Activated B cell treated with CpG ODN at 0.5 μM for 24 hours (primary cell): ENCODE measurements at regions of chr14 and their contacts with region 1.

Region 1: DNA sequence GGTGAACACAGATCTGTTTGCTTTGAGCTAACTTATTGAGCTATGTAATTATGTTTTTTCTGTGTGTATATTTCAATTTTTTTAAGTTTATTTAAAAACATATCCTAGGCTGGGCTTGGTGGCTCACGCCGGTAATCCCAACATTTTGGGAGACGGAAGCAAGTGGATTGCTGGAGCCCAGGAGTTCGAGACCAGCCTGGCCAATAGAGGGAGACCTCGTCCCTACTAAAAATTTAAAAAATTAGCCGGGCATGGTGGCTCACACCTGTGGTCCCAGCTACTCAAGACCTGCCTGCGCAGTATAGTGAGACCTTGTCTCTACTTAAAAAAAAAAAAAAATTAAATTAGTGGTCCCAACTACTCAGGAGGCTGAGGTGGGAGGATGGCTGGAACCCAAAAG is 16.2 kb upstream of the RNASE1 start:
- DNase-seq: no peak
- ATAC-seq: no peak
- H3K4me3 Mint-ChIP-seq: no peak overlapping the region
- H3K27ac Mint-ChIP-seq: no peak overlapping the region
- H3K4me1 Mint-ChIP-seq: peaks cover 28% of the 10 kb centered on the region
- H3K27me3 Mint-ChIP-seq: no peaks in the 10 kb centered on the region
- CTCF ChIP-seq: no peak

Region 2: GRCh38 chr14:20799892-20800544 is 18.8 kb before region 1 on chr14:
- CTCF ChIA-PET with region 1: no interaction called
- POLR2A ChIA-PET with region 1: no interaction called
- intact Hi-C with region 1: loop called (anchors 1 kb)
- DNase-seq: no peak
- ATAC-seq: peak; percentile 45
- H3K4me3 Mint-ChIP-seq: peak overlapping the region; percentile 19
- H3K27ac Mint-ChIP-seq: no peak overlapping the region
- H3K4me1 Mint-ChIP-seq: peaks cover 38% of the 10 kb centered on the region
- H3K27me3 Mint-ChIP-seq: no peaks in the 10 kb centered on the region
- CTCF ChIP-seq: no peak